Naive thymus-derived CD4-positive, alpha-beta T cell (primary cell): ENCODE measurements at regions of chr2 and their contacts with region 1.

Region 1: DNA sequence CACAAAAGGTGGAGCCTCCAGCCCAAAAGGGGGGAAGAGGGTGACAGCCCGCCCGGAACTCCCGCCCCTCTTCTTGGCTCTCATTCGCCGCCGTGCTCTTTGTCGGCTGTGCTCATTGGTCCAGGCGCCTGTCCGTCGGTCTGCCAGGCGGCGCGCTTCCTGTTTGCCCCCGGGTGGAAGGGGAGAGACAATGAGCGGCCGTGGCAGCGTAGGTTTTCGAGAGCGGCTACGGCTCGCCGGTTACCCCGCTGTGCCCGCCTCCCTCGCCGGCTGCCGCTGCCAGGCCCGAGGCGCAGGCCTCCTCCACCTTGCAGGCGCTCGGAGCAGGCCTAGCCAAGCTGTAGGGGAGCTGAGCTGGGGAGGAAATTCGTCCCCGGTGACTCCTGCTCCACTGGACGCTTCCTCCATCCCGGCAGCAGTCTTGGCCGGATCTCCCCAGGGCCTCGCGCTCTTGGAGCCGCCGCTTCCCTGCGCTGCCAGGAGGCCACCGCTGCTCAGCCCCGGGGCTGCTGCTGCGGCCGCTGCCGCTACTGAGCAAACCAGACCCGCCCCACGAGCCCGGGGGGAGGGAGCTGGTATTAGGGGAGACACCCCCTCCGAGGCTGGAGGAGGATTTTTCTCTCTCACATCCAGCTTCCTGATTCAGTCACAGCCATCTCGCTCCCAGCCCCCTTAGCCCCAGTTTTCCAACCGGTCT is at the start of gene SP3:
- DNase-seq: peak; percentile 88 to 97 (median 94)
- ATAC-seq: peak; percentile 75
- H3K4me3 ChIP-seq: peak within 1 kb of the TSS; percentile 88
- H3K4me3 Mint-ChIP-seq: peak within 1 kb of the TSS; percentile 91 to 99 (median 96)
- H3K27ac ChIP-seq: peak within 1 kb of the TSS; percentile 96
- H3K27ac Mint-ChIP-seq: peak within 1 kb of the TSS; percentile 97 to 100 (median 99)
- H3K4me1 ChIP-seq: peaks cover 13 to 25% of the 10 kb centered on the region in 2 donors
- H3K4me1 Mint-ChIP-seq: peaks cover 22 to 38% (median 31%) of the 10 kb centered on the region in 7 donors
- H3K27me3 ChIP-seq: no peaks in the 10 kb centered on the region
- H3K27me3 Mint-ChIP-seq: peaks cover 0 to 2% (median 0%) of the 10 kb centered on the region in 5 donors
- total RNA-seq, gene SP3: 108 to 158 (median 131) TPM

Region 2: DNA sequence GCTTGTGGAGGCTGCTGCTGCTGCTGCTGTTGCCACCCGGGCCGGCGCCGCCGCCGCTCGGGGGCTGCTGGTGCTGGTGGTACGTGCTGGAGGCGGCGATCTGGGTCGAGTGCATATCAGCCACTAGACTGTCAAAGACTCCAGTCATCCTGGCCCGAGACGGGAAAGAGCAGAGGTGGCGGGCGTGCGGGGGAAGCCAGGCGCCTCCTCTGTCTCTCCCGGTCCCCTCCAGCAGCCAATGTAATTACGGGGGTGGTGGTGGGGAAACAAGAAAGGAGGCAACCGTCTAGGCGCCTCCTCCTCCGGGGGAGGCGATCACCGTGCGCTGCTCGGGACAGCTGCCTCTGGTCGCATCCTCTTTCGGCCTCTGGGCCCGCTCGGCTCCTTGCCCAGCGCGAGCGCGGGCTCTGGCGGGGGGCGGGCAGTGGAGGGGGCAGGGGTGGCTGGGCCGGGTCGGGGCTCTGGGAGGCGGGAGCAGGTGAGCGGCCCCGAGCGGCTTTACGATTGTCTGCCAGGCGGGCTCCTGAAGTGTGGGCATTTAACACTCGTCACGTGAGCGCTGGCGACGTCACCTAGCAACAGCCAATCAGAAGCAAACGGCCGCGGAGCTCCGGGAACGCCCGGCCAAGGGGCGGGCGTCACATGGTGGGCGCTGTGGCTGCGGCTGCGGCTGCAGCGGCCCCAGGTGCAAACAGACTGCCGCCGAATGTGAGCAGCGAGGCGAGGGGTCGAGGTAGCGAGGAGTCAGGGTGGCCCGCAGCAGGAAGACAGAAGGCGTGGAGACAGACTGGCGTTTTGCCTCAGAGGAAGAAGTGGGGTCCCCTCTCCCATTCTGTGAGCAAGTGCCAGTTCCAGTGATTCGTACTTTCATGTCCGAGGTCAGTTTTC is 1862.8 kb before region 1 on chr2 and contains the start of gene DLX2:
- CTCF ChIA-PET with region 1: no interaction called
- POLR2A ChIA-PET with region 1: no interaction called
- intact Hi-C with region 1: loop called in 1 of 2 experiments (anchors 10 kb)
- DNase-seq: peak in 5 of 9 donors; percentile 23 to 43 (median 32)
- ATAC-seq: peak; percentile 61
- H3K4me3 ChIP-seq: peak within 1 kb of the TSS; percentile 32
- H3K4me3 Mint-ChIP-seq: peak within 1 kb of the TSS; percentile 74 to 88 (median 82)
- H3K27ac ChIP-seq: no peak within 1 kb of the TSS
- H3K27ac Mint-ChIP-seq: peak within 1 kb of the TSS in 8 of 9 donors; percentile 11 to 89 (median 80)
- H3K4me1 ChIP-seq: peaks cover 41 to 62% of the 10 kb centered on the region in 2 donors
- H3K4me1 Mint-ChIP-seq: peaks cover 29 to 59% (median 49%) of the 10 kb centered on the region in 7 donors
- H3K27me3 ChIP-seq: peaks cover 48 to 83% of the 10 kb centered on the region in 2 donors
- H3K27me3 Mint-ChIP-seq: peaks cover 65 to 91% (median 70%) of the 10 kb centered on the region in 5 donors
- total RNA-seq, gene DLX2: 0.16 to 0.34 TPM in 2 of 5 experiments, not detected in the others

Region 3: GRCh38 chr2:173354601-173355131 is 610.8 kb before region 1 on chr2 and contains the start of gene CDCA7:
- CTCF ChIA-PET with region 1: no interaction called
- POLR2A ChIA-PET with region 1: no interaction called
- intact Hi-C with region 1: loop called in 1 of 2 experiments (anchors 2 kb)
- DNase-seq: peak in 8 of 9 donors; percentile 2 to 84 (median 26)
- ATAC-seq: peak; percentile 64
- H3K4me3 ChIP-seq: peak within 1 kb of the TSS; percentile 67
- H3K4me3 Mint-ChIP-seq: peak within 1 kb of the TSS; percentile 87 to 95 (median 90)
- H3K27ac ChIP-seq: no peak within 1 kb of the TSS
- H3K27ac Mint-ChIP-seq: peak within 1 kb of the TSS in 4 of 9 donors; percentile 23 to 97 (median 46)
- H3K4me1 ChIP-seq: peaks cover 6 to 17% of the 10 kb centered on the region in 2 donors
- H3K4me1 Mint-ChIP-seq: peaks cover 7 to 57% (median 18%) of the 10 kb centered on the region in 7 donors
- H3K27me3 ChIP-seq: peaks cover 0 to 2% of the 10 kb centered on the region in 2 donors
- H3K27me3 Mint-ChIP-seq: peaks cover 18 to 62% (median 50%) of the 10 kb centered on the region in 5 donors
- total RNA-seq, gene CDCA7: 0.46 to 86.7 (median 0.85) TPM

Region 4: GRCh38 chr2:173955004-173955403 is 10.5 kb before region 1 on chr2:
- CTCF ChIA-PET with region 1: interaction called, 5 read pairs
- POLR2A ChIA-PET with region 1: interaction called, 3 read pairs
- intact Hi-C with region 1: loop called in 1 of 2 experiments (anchors 1 kb)
- DNase-seq: no peak
- ATAC-seq: peak; percentile 12
- H3K4me3 ChIP-seq: no peak overlapping the region
- H3K4me3 Mint-ChIP-seq: peak overlapping the region in 9 of 10 donors; percentile 41 to 99 (median 68)
- H3K27ac ChIP-seq: no peak overlapping the region
- H3K27ac Mint-ChIP-seq: peak overlapping the region in 3 of 9 donors; percentile 18 to 26 (median 22)
- H3K4me1 ChIP-seq: peaks cover 48 to 89% of the 10 kb centered on the region in 2 donors
- H3K4me1 Mint-ChIP-seq: peaks cover 73 to 100% (median 96%) of the 10 kb centered on the region in 7 donors
- H3K27me3 ChIP-seq: no peaks in the 10 kb centered on the region
- H3K27me3 Mint-ChIP-seq: no peaks in the 10 kb centered on the region

Region 5: GRCh38 chr2:174108579-174108978 is 143.1 kb after region 1 on chr2:
- CTCF ChIA-PET with region 1: no interaction called
- POLR2A ChIA-PET with region 1: no interaction called
- intact Hi-C with region 1: no loop called
- DNase-seq: no peak
- ATAC-seq: no peak
- H3K4me3 ChIP-seq: no peak overlapping the region
- H3K4me3 Mint-ChIP-seq: no peak overlapping the region
- H3K27ac ChIP-seq: no peak overlapping the region
- H3K27ac Mint-ChIP-seq: no peak overlapping the region
- H3K4me1 ChIP-seq: no peaks in the 10 kb centered on the region
- H3K4me1 Mint-ChIP-seq: no peaks in the 10 kb centered on the region
- H3K27me3 ChIP-seq: no peaks in the 10 kb centered on the region
- H3K27me3 Mint-ChIP-seq: no peaks in the 10 kb centered on the region

Region 6: GRCh38 chr2:174248187-174248997 is 282.9 kb after region 1 on chr2 and contains the start of gene OLA1:
- CTCF ChIA-PET with region 1: no interaction called
- POLR2A ChIA-PET with region 1: interaction called, 8 read pairs
- intact Hi-C with region 1: loop called (anchors 1 kb)
- DNase-seq: peak; percentile 91 to 99 (median 95)
- ATAC-seq: peak; percentile 99
- H3K4me3 ChIP-seq: peak within 1 kb of the TSS; percentile 90
- H3K4me3 Mint-ChIP-seq: peak within 1 kb of the TSS; percentile 71 to 88 (median 86)
- H3K27ac ChIP-seq: peak within 1 kb of the TSS; percentile 82
- H3K27ac Mint-ChIP-seq: peak within 1 kb of the TSS; percentile 67 to 91 (median 79)
- H3K4me1 ChIP-seq: peaks cover 6 to 12% of the 10 kb centered on the region in 2 donors
- H3K4me1 Mint-ChIP-seq: peaks cover 18 to 32% (median 25%) of the 10 kb centered on the region in 7 donors
- H3K27me3 ChIP-seq: no peaks in the 10 kb centered on the region
- H3K27me3 Mint-ChIP-seq: peaks cover 0 to 5% (median 0%) of the 10 kb centered on the region in 5 donors
- total RNA-seq, gene OLA1: 34.4 to 84.7 (median 40.3) TPM

Region 7: DNA sequence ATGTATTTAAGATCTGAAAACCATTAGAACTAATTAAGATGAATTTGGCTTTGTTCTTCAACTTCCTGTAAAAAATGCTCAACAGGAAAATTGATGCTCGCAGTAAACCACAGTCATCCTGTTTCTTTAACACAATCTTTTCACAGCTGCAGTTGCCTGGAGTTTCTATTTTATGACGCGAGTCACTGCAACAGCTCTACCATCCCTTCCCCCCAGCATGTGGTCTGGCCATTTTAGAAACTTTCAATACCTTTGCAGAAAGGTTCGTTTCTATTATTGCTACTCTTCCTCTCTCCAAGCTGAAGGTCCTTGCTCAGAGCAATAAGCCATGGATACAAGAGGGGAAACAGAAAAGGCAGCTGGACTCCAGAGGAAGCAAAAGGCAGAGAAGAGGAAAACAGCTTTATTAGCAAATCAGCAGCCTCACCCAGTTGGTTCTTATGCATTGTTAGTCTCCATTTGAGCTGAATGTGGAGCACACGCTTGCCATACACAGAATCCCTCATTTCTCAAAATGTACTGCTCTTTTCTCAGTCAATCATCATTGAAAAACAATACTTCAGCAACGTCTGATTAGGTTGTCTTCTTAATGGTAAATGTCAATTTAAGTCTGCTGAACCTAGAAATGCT is 628.2 kb after region 1 on chr2:
- CTCF ChIA-PET with region 1: no interaction called
- POLR2A ChIA-PET with region 1: interaction called, 4 read pairs
- intact Hi-C with region 1: loop called in 1 of 2 experiments (anchors 10 kb)
- DNase-seq: peak in 8 of 9 donors; percentile 53 to 92 (median 90)
- ATAC-seq: peak; percentile 87
- H3K4me3 ChIP-seq: peak overlapping the region; percentile 59
- H3K4me3 Mint-ChIP-seq: peak overlapping the region; percentile 87 to 100 (median 92)
- H3K27ac ChIP-seq: peak overlapping the region; percentile 90
- H3K27ac Mint-ChIP-seq: peak overlapping the region; percentile 90 to 99 (median 97)
- H3K4me1 ChIP-seq: peaks cover 42 to 44% of the 10 kb centered on the region in 2 donors
- H3K4me1 Mint-ChIP-seq: peaks cover 47 to 69% (median 59%) of the 10 kb centered on the region in 7 donors
- H3K27me3 ChIP-seq: no peaks in the 10 kb centered on the region
- H3K27me3 Mint-ChIP-seq: no peaks in the 10 kb centered on the region

Region 8: DNA sequence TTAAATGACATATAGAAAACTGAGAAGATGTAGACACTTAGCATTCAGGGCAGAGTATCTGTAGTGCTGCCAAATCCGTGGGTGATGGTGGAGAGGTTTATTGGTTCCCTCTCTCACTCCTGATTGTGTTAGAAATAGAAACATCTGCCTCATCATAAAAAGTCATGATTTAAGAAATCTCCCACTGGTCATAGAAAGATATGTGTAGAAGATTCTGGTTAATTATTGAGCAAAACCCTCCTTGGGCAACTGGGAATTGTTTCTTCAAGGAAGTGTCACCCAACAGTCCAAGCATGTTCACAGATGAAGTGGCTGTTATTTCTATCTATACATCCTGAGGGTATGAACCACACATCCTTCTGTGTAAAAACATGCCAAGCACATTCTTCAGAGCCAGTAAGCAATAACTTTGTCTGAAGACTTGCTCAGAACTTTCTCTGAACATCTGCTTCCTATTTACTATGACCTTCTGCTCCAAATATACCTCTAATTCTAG is 832.4 kb after region 1 on chr2:
- CTCF ChIA-PET with region 1: no interaction called
- POLR2A ChIA-PET with region 1: no interaction called
- intact Hi-C with region 1: no loop called
- DNase-seq: no peak
- ATAC-seq: no peak
- H3K4me3 ChIP-seq: no peak overlapping the region
- H3K4me3 Mint-ChIP-seq: no peak overlapping the region
- H3K27ac ChIP-seq: no peak overlapping the region
- H3K27ac Mint-ChIP-seq: no peak overlapping the region
- H3K4me1 ChIP-seq: no peaks in the 10 kb centered on the region
- H3K4me1 Mint-ChIP-seq: peaks cover 0 to 18% (median 0%) of the 10 kb centered on the region in 7 donors
- H3K27me3 ChIP-seq: no peaks in the 10 kb centered on the region
- H3K27me3 Mint-ChIP-seq: peaks cover 0 to 5% (median 0%) of the 10 kb centered on the region in 5 donors

Region 9: DNA sequence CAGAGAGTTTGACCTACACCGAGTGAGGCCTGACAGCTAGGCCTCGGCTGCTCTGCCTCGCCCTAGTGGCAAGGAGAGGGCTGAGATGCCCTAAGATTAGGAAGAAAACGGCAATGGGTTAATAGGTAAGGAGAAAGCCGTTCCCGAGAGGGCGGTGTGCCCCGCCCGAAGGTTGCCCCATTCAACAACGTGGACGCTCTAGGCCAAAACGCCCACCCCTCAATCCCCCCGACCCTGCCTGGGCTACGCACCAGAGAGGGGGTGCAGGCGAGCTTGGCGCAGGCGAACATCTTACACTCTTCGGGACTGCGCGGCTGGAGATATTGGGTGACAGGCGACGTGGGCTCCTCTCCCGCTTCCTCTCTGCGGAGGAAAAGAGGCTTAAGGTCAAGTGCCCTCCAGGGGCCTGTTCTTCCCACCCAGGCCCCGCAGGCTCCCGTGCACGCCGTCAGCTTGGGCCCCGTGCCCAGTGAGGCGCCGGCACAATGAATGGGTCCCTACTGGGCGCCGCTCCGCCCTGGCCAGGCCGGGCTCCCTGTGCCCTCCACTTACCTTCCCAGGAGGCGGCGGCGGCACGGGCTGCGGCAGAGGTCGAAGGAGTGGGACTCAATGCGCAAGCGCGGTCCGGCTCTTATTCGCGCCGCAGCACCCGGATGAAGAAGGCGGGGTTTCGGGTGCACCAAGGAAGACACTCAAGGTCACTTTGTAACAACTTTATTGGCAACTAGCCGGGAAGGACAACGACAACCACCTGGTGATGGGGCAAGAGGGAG is 1215.8 kb after region 1 on chr2 and contains the start of gene ATP5MC3:
- CTCF ChIA-PET with region 1: no interaction called
- POLR2A ChIA-PET with region 1: no interaction called
- intact Hi-C with region 1: loop called in 1 of 2 experiments (anchors 2 kb)
- DNase-seq: peak; percentile 83 to 92 (median 89)
- ATAC-seq: peak; percentile 93
- H3K4me3 ChIP-seq: peak within 1 kb of the TSS; percentile 84
- H3K4me3 Mint-ChIP-seq: peak within 1 kb of the TSS; percentile 77 to 96 (median 88)
- H3K27ac ChIP-seq: peak within 1 kb of the TSS; percentile 89
- H3K27ac Mint-ChIP-seq: peak within 1 kb of the TSS; percentile 86 to 99 (median 93)
- H3K4me1 ChIP-seq: peaks cover 6 to 13% of the 10 kb centered on the region in 2 donors
- H3K4me1 Mint-ChIP-seq: peaks cover 14 to 39% (median 32%) of the 10 kb centered on the region in 7 donors
- H3K27me3 ChIP-seq: no peaks in the 10 kb centered on the region
- H3K27me3 Mint-ChIP-seq: no peaks in the 10 kb centered on the region
- total RNA-seq, gene ATP5MC3: 70.3 to 220 (median 77.6) TPM